Vagina (tissue), 2 donors: ENCODE measurements at regions of chr11 and their contacts with region 1.

Region 1: GRCh38 chr11:36131721-36132397 is 157.4 kb downstream of the COMMD9 start:
- DNase-seq: no peak
- H3K4me3 ChIP-seq: no peak overlapping the region
- H3K27ac ChIP-seq: peak overlapping the region; percentile 22
- H3K4me1 ChIP-seq: peaks cover 7% of the 10 kb centered on the region
- H3K27me3 ChIP-seq: no peaks in the 10 kb centered on the region
- CTCF ChIP-seq: peak in 2 of 3 experiments; percentile 56 to 57
- POLR2A ChIP-seq: no peak

Region 2: GRCh38 chr11:35845860-35846259 is 286.0 kb before region 1 on chr11:
- intact Hi-C with region 1: loop called (anchors 10 kb)
- DNase-seq: peak in 1 of 2 donors; percentile 16
- H3K4me3 ChIP-seq: no peak overlapping the region
- H3K27ac ChIP-seq: no peak overlapping the region
- H3K4me1 ChIP-seq: no peaks in the 10 kb centered on the region
- H3K27me3 ChIP-seq: no peaks in the 10 kb centered on the region
- CTCF ChIP-seq: no peak
- POLR2A ChIP-seq: no peak

Region 3: GRCh38 chr11:36376888-36377758 is 245.3 kb after region 1 on chr11:
- intact Hi-C with region 1: no loop called
- DNase-seq: no peak
- H3K4me3 ChIP-seq: peak overlapping the region; percentile 71 to 74
- H3K27ac ChIP-seq: peak overlapping the region; percentile 83
- H3K4me1 ChIP-seq: peaks cover 26% of the 10 kb centered on the region
- H3K27me3 ChIP-seq: no peaks in the 10 kb centered on the region
- CTCF ChIP-seq: peak in 2 of 3 experiments; percentile 24 to 50
- POLR2A ChIP-seq: no peak